CD8-positive, alpha-beta T cell (primary cell): ENCODE measurements at regions of chr16 and their contacts with region 1.

Region 1: GRCh38 chr16:84084570-84085270 is 32.0 kb downstream of the MBTPS1 start:
- DNase-seq: peak; percentile 44 to 84 (median 71)
- ATAC-seq: peak; percentile 88
- H3K4me3 ChIP-seq: no peak overlapping the region
- H3K4me3 Mint-ChIP-seq: no peak overlapping the region
- H3K27ac ChIP-seq: no peak overlapping the region
- H3K27ac Mint-ChIP-seq: no peak overlapping the region
- H3K4me1 ChIP-seq: peaks cover 20% of the 10 kb centered on the region
- H3K4me1 Mint-ChIP-seq: peaks cover 32% of the 10 kb centered on the region
- H3K27me3 ChIP-seq: no peaks in the 10 kb centered on the region
- H3K27me3 Mint-ChIP-seq: no peaks in the 10 kb centered on the region
- CTCF ChIP-seq: peak; percentile 73

Region 2: GRCh38 chr16:84144859-84145639 is 60.3 kb after region 1 on chr16 and contains the starts of genes DNAAF1 and HSDL1:
- CTCF ChIA-PET with region 1: interaction called, 10 read pairs
- POLR2A ChIA-PET with region 1: no interaction called
- intact Hi-C with region 1: loop called (anchors 2 kb)
- DNase-seq: peak; percentile 91 to 98 (median 96)
- ATAC-seq: peak; percentile 81
- H3K4me3 ChIP-seq: peak within 1 kb of the TSS; percentile 70 to 90
- H3K4me3 Mint-ChIP-seq: peak within 1 kb of the TSS; percentile 93
- H3K27ac ChIP-seq: peak within 1 kb of the TSS; percentile 54 to 65
- H3K27ac Mint-ChIP-seq: peak within 1 kb of the TSS; percentile 88
- H3K4me1 ChIP-seq: peaks cover 11% of the 10 kb centered on the region
- H3K4me1 Mint-ChIP-seq: peaks cover 25% of the 10 kb centered on the region
- H3K27me3 ChIP-seq: no peaks in the 10 kb centered on the region
- H3K27me3 Mint-ChIP-seq: peaks cover 2% of the 10 kb centered on the region
- CTCF ChIP-seq: no peak
- total RNA-seq, gene DNAAF1: not detected
- total RNA-seq, gene HSDL1: 8.7 to 9.9 TPM

Region 3: DNA sequence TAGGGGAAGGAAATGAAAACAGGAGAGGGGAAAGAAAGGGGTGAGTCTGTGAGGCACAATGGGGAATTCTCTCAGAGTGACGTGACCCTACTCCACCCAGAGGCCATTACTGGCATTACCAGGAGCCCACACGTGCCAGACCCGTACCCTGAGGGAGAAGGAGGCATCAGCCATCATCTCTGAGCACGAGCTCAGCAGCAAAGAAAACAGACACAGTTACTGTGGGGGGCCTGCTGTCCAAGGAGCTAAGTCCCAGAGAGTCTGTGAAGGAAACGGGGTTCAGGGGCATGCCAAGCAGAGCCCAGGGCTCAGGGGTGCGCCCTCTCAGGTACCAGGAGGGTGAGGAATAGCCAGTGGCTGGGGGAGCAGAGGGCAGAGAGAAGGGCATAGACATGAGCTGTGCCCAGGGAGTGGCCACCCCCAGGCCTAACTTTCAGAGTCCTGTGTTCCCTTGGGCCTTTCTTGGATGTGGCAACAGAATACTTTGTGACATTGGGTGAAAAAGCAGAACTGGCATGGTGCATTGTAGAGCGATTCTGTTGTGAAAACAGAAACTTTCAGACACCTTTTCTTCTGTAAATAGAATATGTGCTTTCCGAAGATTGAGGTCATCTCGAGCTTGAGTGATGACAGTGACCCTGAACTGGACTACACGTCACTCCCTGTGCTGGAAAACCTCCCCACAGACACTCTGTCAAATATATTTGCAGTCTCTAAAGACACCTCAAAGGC is 90.8 kb after region 1 on chr16:
- CTCF ChIA-PET with region 1: interaction called, 100 read pairs
- POLR2A ChIA-PET with region 1: no interaction called
- intact Hi-C with region 1: loop called (anchors 1 kb)
- DNase-seq: peak in 8 of 9 experiments; percentile 49 to 69 (median 60)
- ATAC-seq: peak; percentile 98
- H3K4me3 ChIP-seq: no peak overlapping the region
- H3K4me3 Mint-ChIP-seq: no peak overlapping the region
- H3K27ac ChIP-seq: no peak overlapping the region
- H3K27ac Mint-ChIP-seq: peak overlapping the region; percentile 27
- H3K4me1 ChIP-seq: no peaks in the 10 kb centered on the region
- H3K4me1 Mint-ChIP-seq: peaks cover 4% of the 10 kb centered on the region
- H3K27me3 ChIP-seq: no peaks in the 10 kb centered on the region
- H3K27me3 Mint-ChIP-seq: peaks cover 2% of the 10 kb centered on the region
- CTCF ChIP-seq: peak; percentile 85